ENCODE measurements at regions of chr3 and their contacts with region 1.

Region 1: GRCh38 chr3:177359593-177360357 is 162.5 kb upstream of the TBL1XR1 start:
- DNase-seq: peak; percentile 89
- ATAC-seq: peak; percentile 91
- H3K4me3 ChIP-seq: peak overlapping the region; percentile 15 to 52
- H3K27ac ChIP-seq: peak overlapping the region; percentile 99
- H3K4me1 ChIP-seq: peaks cover 48% of the 10 kb centered on the region
- H3K27me3 ChIP-seq: no peaks in the 10 kb centered on the region
- CTCF ChIP-seq: no peak

Region 2: GRCh38 chr3:177197041-177197727 is 162.6 kb before region 1 on chr3 and contains the start of gene TBL1XR1:
- CTCF ChIA-PET with region 1: interaction called, 3 read pairs
- POLR2A ChIA-PET with region 1: interaction called, 9 read pairs
- in situ Hi-C with region 1: no loop called
- intact Hi-C with region 1: loop called (anchors 1 kb)
- DNase-seq: peak; percentile 48
- ATAC-seq: peak; percentile 81
- H3K4me3 ChIP-seq: peak within 1 kb of the TSS; percentile 75 to 84
- H3K27ac ChIP-seq: peak within 1 kb of the TSS; percentile 100
- H3K4me1 ChIP-seq: peaks cover 42% of the 10 kb centered on the region
- H3K27me3 ChIP-seq: no peaks in the 10 kb centered on the region
- CTCF ChIP-seq: no peak
- total RNA-seq, gene TBL1XR1: 192 TPM

Region 3: DNA sequence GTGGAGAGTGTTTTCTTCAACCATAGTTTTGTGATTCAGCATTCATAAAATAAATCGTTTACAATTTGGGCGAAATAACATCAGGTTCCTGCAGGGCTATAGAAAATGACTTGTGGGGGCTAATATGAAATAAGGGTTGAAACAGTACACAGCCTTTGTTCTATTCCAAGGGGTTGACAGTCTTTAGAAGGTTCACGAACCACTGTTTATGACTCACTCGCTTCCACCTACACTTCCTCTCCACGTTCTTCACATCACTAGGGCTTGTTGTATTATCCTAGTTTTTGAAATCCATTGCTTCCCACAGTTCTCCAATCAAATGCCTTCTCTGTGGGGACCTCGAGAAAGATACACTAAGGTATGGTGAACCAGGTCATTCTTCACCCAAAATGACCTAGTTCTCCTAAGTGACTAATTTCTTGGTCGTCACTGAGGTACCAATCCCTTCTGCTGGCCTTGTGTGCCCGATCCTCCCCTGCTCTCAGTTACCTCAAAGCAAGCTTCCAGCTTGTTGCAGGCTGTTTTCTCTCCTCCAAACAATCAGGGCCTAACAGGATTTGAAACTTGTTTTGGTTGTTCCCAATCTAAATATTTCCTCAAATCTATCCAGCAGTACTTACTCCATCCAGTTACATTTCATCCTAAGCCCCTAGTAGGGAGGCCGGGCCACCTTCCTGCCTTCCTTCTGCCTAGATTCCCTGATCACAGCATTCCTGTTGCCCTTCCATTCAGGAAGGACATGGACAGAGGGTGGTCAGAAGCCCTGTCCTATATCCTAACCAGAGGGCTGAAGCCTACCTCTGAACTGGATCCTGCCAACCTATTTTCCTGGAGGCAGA is 139.4 kb before region 1 on chr3:
- CTCF ChIA-PET with region 1: no interaction called
- POLR2A ChIA-PET with region 1: no interaction called
- in situ Hi-C with region 1: no loop called
- intact Hi-C with region 1: no loop called
- DNase-seq: no peak
- ATAC-seq: peak; percentile 53; the same call in 1 of the 2 replicates
- H3K4me3 ChIP-seq: no peak overlapping the region
- H3K27ac ChIP-seq: peak overlapping the region; percentile 65; the same call in 1 of the 2 replicates
- H3K4me1 ChIP-seq: no peaks in the 10 kb centered on the region
- H3K27me3 ChIP-seq: no peaks in the 10 kb centered on the region
- CTCF ChIP-seq: no peak

Region 4: DNA sequence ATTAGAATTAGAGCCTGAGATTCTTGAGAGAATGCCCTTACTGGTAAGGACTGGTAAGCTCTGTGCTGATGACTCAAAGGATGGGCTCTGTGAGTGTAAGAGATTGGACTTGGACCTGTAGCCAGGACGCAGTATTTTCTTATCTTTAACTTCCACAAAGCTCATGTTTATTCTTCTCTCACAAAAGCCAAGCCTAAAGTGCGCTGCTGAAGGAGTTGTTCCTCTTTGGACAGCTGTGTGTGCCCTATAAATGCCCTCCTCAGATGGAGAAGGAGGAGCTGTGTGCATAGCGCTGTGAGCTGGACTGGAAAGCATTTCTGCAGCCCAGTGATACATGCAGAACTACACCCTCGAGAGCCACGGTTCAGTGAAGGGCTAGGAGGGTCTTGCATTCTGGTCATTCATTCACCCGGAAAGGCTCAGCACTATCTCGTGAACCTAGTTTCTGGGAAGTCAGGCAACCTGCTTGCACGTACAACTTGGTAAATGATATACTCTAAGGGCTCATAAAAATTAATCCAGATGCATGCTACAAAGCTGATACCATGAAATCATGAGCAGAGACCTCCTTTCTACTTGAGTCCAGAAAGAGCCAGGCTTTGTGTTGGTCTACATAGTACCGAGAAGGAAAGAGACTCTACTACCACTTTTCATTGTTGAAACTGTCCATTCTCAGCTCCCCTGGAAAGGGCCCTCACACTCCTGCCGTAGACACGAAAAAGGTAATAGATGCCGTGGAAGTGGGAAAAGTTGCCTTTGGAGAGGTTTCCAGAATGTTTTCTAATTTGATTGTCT is 59.5 kb before region 1 on chr3:
- CTCF ChIA-PET with region 1: no interaction called
- POLR2A ChIA-PET with region 1: no interaction called
- in situ Hi-C with region 1: no loop called
- intact Hi-C with region 1: loop called (anchors 10 kb)
- DNase-seq: no peak
- ATAC-seq: peak; percentile 94
- H3K4me3 ChIP-seq: peak overlapping the region; percentile 5 to 40; a peak in 3 of 4 replicates
- H3K27ac ChIP-seq: peak overlapping the region; percentile 90
- H3K4me1 ChIP-seq: peaks cover 14% of the 10 kb centered on the region
- H3K27me3 ChIP-seq: no peaks in the 10 kb centered on the region
- CTCF ChIP-seq: no peak

Region 5: GRCh38 chr3:177314897-177315296 is 44.9 kb before region 1 on chr3:
- CTCF ChIA-PET with region 1: no interaction called
- POLR2A ChIA-PET with region 1: no interaction called
- in situ Hi-C with region 1: no loop called
- intact Hi-C with region 1: no loop called
- DNase-seq: no peak
- ATAC-seq: no peak
- H3K4me3 ChIP-seq: no peak overlapping the region
- H3K27ac ChIP-seq: peak overlapping the region; percentile 11; the same call in 1 of the 2 replicates
- H3K4me1 ChIP-seq: no peaks in the 10 kb centered on the region
- H3K27me3 ChIP-seq: no peaks in the 10 kb centered on the region
- CTCF ChIP-seq: no peak

Region 6: DNA sequence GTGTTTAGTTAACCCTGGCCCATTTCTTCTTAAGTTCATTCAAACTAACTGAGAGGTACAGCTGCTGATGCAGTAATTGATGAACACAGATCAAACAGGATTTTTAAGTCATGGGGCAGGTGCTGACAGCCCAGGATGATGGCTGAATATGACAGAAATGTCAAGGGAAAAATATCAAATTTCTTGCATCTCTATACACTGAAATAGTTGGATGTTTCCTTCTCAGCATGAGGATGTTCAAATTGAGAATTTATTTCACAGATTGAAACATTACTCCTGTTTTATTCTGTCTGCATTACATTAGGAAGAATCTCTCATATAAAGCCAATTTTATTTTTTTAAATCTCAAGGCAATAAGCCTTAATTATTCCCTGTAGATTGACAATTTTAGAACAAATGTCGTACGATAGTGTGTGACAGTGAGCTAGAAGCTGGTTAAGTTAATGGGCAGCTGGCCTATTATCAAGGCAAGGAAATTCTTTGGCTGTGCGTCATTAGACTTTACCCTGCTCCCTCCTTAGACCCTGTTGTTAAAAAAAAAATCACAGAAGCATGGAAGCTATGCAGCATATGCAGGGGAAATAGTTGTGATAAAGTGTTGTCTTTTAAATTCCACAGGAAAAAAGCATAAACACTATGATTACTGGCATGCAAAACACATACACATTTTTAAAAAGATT is 992.7 kb after region 1 on chr3:
- CTCF ChIA-PET with region 1: no interaction called
- POLR2A ChIA-PET with region 1: interaction called, 11 read pairs
- in situ Hi-C with region 1: no loop called
- intact Hi-C with region 1: no loop called
- DNase-seq: peak; percentile 1
- ATAC-seq: peak; percentile 93
- H3K4me3 ChIP-seq: no peak overlapping the region
- H3K27ac ChIP-seq: peak overlapping the region; percentile 51
- H3K4me1 ChIP-seq: peaks cover 6% of the 10 kb centered on the region; the same call in 1 of the 2 replicates
- H3K27me3 ChIP-seq: no peaks in the 10 kb centered on the region
- CTCF ChIP-seq: no peak